Right lobe of liver (tissue), 6 donors: ENCODE measurements at regions of chr14 and their contacts with region 1.

Region 1: GRCh38 chr14:91177073-91178034 is 63.5 kb downstream of the DGLUCY start:
- DNase-seq: peak in 1 of 3 donors; percentile 42
- ATAC-seq: peak; percentile 75 to 79 (median 78)
- H3K4me3 ChIP-seq: no peak overlapping the region
- H3K27ac ChIP-seq: no peak overlapping the region
- H3K4me1 ChIP-seq: peaks cover 0 to 15% (median 4%) of the 10 kb centered on the region in 4 donors
- H3K27me3 ChIP-seq: no peaks in the 10 kb centered on the region
- CTCF ChIP-seq: peak; percentile 75 to 85 (median 80)
- POLR2A ChIP-seq: no peak

Region 2: DNA sequence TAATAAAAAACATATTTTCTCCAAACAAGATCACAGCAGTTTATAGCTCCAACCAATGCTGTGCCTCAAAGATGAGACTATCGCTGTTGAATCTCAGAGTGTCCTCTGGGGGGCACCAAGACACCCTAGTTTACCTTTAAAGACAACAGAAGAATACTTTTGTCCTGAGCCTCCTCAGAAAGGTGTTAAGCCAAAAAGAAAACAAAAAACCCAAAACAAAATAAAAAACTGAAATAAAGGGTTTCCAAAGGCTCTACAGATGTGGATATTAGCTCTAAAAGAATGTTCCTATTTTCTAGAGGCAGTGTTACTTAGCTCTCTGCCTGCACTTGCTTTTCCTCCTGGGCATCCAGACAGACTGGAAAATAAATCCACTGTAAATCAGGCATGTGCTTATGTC is 274.3 kb before region 1 on chr14:
- intact Hi-C with region 1: loop called in 1 of 2 experiments (anchors 10 kb)
- DNase-seq: peak in 1 of 3 donors; percentile 51
- ATAC-seq: peak; percentile 92 to 97 (median 94)
- H3K4me3 ChIP-seq: no peak overlapping the region
- H3K27ac ChIP-seq: no peak overlapping the region
- H3K4me1 ChIP-seq: no peaks in the 10 kb centered on the region
- H3K27me3 ChIP-seq: no peaks in the 10 kb centered on the region
- CTCF ChIP-seq: peak; percentile 67 to 87 (median 78)
- POLR2A ChIP-seq: no peak

Region 3: GRCh38 chr14:90911121-90911520 is 266.2 kb before region 1 on chr14:
- intact Hi-C with region 1: loop called (anchors 5 to 10 kb)
- DNase-seq: no peak
- ATAC-seq: no peak
- H3K4me3 ChIP-seq: no peak overlapping the region
- H3K27ac ChIP-seq: no peak overlapping the region
- H3K4me1 ChIP-seq: no peaks in the 10 kb centered on the region
- H3K27me3 ChIP-seq: no peaks in the 10 kb centered on the region
- CTCF ChIP-seq: no peak
- POLR2A ChIP-seq: no peak

Region 4: DNA sequence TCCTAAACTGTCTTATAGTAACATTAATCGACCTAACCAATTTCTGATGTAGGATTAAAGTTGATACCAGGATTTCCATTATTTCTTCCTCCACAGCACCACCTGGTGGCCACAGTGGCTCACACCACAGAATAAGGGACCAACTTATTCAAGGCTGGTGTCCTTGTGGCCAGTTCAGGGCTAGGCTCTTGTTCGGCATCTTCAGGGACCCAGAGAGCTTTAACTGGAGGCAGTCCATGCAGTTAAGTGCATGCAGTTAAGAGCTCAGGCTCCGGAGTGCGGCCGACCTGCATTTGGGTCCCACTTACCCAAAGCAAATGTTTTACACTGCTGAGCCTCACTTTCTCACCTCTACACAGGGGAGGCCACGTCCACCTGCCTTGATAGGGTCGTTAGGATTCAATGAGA is 109.2 kb after region 1 on chr14:
- intact Hi-C with region 1: loop called (anchors 5 to 10 kb)
- DNase-seq: peak in 2 of 3 donors; percentile 71 to 77
- ATAC-seq: peak; percentile 89 to 95 (median 92)
- H3K4me3 ChIP-seq: no peak overlapping the region
- H3K27ac ChIP-seq: no peak overlapping the region
- H3K4me1 ChIP-seq: no peaks in the 10 kb centered on the region
- H3K27me3 ChIP-seq: no peaks in the 10 kb centered on the region
- CTCF ChIP-seq: peak; percentile 84 to 91 (median 88)
- POLR2A ChIP-seq: no peak